Esophagus squamous epithelium (tissue), 5 donors: ENCODE measurements at regions of chr14 and their contacts with region 1.

Region 1: DNA sequence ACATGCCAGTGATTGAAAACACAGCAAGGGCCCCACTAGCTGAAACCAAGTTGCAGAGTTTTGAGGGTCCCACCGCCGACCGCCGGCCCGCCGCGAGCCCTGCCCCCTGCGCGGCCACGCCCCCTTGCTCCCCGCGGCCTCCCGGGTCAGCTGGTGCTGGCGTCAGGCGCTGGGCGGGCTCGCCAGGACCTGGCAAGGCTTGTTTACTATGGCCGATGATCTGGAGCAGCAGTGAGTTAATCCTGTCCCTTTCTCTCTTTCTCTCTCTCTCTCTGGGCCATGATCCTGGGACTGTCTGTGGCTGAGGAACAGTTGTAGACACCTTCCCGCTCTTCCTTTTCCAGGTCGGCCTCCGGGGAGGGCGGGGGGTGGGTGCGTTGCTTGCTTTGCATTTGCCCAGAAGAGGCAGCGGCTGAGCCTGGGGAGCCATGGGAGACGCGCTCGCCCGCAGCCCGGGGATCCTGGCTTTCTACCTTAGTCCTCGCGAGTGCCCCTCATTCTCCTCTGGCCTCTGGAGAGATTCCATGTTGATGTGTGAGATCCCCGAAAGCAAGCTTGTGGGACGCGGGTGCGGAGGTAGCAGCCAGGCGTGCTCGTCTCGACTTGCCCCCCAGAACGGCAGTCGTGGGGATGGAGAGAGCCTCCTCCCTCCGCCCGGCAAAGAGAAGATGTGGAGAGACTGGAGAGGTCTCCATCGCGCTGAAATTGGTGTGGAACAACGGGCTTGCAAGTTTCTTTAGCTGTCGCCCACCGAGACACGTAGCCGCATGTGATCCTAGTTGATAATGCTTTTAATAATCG is at the start of gene ABHD4:
- DNase-seq: no peak
- H3K4me3 ChIP-seq: peak within 1 kb of the TSS; percentile 50 to 92 (median 87)
- H3K27ac ChIP-seq: peak within 1 kb of the TSS; percentile 90 to 98 (median 94)
- H3K4me1 ChIP-seq: peaks cover 8 to 54% (median 15%) of the 10 kb centered on the region in 3 donors
- H3K27me3 ChIP-seq: peaks cover 0 to 4% (median 0%) of the 10 kb centered on the region in 4 donors
- CTCF ChIP-seq: no peak
- POLR2A ChIP-seq: peak in 3 of 4 donors; percentile 51 to 92 (median 56)
- total RNA-seq, gene ABHD4: 22.9 to 45.4 (median 30.1) TPM

Region 2: DNA sequence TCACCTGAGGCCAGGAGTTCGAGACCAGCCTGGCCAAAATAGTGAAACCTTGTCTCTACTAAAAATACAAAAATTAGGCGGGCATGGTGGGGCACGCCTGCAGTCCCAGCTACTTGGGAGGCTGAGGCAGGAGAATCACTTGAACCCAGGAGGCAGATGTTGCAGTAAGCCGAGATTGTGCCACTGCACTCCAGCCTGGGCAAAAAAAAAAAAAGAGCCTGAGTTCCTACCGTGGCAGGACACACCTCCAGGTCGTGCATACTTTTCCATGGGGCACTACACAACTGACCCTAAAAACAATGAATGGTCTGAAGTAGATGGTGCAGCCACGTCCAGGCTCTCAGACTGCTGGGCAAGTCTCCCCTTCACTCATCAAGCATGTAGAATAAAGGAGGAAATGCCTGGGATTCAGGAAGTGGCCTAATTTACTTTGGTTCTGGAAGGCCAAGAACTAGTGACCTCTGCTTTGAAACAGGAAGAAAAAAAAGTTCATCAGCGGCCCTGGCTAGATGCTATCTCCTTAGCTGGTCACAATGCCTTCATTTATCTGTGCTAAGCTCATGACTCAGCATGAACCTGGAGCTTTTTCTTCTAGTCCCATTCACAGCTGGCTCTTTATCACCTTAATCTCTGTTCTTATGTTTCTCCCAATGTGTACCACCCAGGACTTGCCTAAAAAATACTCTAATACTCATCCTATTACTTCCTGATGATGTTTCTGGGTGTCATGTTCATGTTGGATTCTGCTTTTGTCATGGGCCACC is 101.7 kb after region 1 on chr14:
- intact Hi-C with region 1: no loop called
- DNase-seq: no peak
- H3K4me3 ChIP-seq: no peak overlapping the region
- H3K27ac ChIP-seq: no peak overlapping the region
- H3K4me1 ChIP-seq: peaks cover 0 to 8% (median 0%) of the 10 kb centered on the region in 3 donors
- H3K27me3 ChIP-seq: peaks cover 0 to 30% (median 0%) of the 10 kb centered on the region in 4 donors
- CTCF ChIP-seq: no peak
- POLR2A ChIP-seq: no peak

Region 3: DNA sequence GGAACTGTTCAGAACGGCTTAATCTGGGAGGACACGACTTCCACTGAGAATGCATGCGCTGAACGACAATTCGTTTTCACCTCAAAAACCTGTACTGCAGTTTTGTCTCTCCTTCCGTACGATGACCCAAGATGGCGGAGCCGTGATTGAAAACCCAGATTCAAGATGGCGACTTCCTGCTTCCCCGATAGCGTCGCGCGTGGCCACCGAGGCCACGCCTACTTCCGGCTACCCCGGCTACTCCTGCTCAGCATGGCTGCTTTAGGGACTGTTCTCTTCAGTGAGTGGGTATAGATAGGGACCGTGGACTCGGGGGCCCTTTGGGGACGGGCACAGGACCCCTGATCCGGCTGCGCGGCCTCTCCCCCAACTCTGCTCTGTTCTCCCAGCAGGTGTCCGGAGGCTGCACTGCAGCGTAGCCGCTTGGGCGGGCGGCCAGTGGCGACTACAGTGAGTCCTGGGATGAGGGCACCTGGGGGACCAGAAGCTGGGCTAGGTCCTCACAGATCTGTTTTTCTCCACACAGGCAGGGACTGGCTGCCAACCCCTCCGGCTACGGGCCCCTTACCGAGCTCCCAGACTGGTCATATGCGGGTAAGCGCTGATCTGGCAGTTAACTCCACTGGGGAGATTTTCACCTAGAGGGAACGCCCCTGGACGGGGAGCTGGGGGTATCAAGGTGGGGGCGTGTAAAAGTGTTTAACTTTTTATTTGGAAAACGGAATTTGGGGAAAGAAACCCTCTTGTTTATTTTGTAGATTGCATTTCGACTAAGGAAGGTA is 231.6 kb after region 1 on chr14 and contains the start of gene MRPL52:
- intact Hi-C with region 1: loop called (anchors 10 kb)
- DNase-seq: peak; percentile 60
- H3K4me3 ChIP-seq: peak within 1 kb of the TSS; percentile 61 to 90 (median 78)
- H3K27ac ChIP-seq: peak within 1 kb of the TSS; percentile 83 to 91 (median 87)
- H3K4me1 ChIP-seq: peaks cover 7 to 27% (median 11%) of the 10 kb centered on the region in 3 donors
- H3K27me3 ChIP-seq: no peaks in the 10 kb centered on the region
- CTCF ChIP-seq: peak in 1 of 6 experiments; percentile 25
- POLR2A ChIP-seq: peak in 1 of 4 donors; percentile 29
- total RNA-seq, gene MRPL52: 32.8 to 142 (median 82.1) TPM